ENCODE measurements at regions of chr2 and their contacts with region 1.

Region 1: GRCh38 chr2:170815746-170816503 is 762 bp upstream of the GAD1 start:
- DNase-seq: peak; percentile 89
- H3K4me3 ChIP-seq: peak overlapping the region; percentile 14 to 45; a peak in 2 of 4 replicates
- H3K27ac ChIP-seq: no peak overlapping the region
- H3K4me1 ChIP-seq: peaks cover 5 to 21% of the 10 kb centered on the region in 2 experiments; a peak in 2 of 4 replicates
- H3K27me3 ChIP-seq: peaks cover 82% of the 10 kb centered on the region
- CTCF ChIP-seq: peak; percentile 86
- EP300 ChIP-seq: no peak
- RAD21 ChIP-seq: peak; percentile 81

Region 2: DNA sequence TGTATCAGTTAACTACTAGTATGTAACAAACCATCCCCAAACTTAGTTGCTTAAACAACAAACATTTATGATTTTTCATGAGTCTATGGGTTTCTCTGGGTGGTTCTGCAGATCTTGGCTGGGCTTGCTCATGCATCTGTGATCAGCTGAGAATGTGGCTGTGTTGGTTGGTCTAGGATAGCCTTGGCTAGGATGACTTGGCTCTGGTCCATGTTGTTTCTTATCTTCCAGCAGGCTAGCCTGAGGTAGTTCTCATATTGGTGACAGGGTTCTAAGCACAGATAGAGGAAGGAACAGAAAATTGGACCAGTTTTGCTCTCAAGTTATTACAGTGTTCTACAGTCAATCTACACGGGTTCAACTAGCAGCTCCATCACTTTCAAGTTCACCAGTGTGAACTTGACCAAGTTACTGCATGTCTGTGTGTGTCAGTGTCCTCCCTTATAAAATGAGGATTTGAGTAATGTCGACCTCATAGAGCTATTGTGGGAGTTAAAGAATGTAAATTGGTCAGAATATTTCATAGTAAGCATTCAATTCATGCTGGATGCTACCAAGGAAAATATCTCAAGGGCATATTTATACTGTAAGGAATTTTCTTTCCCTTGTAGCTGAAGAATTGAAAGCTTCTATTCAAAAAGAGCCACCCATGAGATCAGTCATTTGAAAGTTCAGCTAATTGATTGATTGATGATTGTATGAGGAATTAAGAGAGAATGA is 572.6 kb before region 1 on chr2:
- CTCF ChIA-PET with region 1: interaction called, 94 read pairs
- POLR2A ChIA-PET with region 1: no interaction called
- DNase-seq: no peak
- H3K4me3 ChIP-seq: no peak overlapping the region
- H3K27ac ChIP-seq: no peak overlapping the region
- H3K4me1 ChIP-seq: no peaks in the 10 kb centered on the region
- H3K27me3 ChIP-seq: no peaks in the 10 kb centered on the region; the same call in 1 of the 2 replicates
- CTCF ChIP-seq: no peak
- EP300 ChIP-seq: no peak
- RAD21 ChIP-seq: no peak

Region 3: GRCh38 chr2:170361090-170361936 is 454.6 kb before region 1 on chr2:
- CTCF ChIA-PET with region 1: interaction called, 94 read pairs
- POLR2A ChIA-PET with region 1: no interaction called
- DNase-seq: peak; percentile 32
- H3K4me3 ChIP-seq: peak overlapping the region in 1 of 2 experiments; percentile 28; a peak in 1 of 4 replicates
- H3K27ac ChIP-seq: no peak overlapping the region
- H3K4me1 ChIP-seq: no peaks in the 10 kb centered on the region
- H3K27me3 ChIP-seq: peaks cover 8% of the 10 kb centered on the region; the same call in 1 of the 2 replicates
- CTCF ChIP-seq: peak; percentile 76
- EP300 ChIP-seq: no peak
- RAD21 ChIP-seq: peak; percentile 59

Region 4: DNA sequence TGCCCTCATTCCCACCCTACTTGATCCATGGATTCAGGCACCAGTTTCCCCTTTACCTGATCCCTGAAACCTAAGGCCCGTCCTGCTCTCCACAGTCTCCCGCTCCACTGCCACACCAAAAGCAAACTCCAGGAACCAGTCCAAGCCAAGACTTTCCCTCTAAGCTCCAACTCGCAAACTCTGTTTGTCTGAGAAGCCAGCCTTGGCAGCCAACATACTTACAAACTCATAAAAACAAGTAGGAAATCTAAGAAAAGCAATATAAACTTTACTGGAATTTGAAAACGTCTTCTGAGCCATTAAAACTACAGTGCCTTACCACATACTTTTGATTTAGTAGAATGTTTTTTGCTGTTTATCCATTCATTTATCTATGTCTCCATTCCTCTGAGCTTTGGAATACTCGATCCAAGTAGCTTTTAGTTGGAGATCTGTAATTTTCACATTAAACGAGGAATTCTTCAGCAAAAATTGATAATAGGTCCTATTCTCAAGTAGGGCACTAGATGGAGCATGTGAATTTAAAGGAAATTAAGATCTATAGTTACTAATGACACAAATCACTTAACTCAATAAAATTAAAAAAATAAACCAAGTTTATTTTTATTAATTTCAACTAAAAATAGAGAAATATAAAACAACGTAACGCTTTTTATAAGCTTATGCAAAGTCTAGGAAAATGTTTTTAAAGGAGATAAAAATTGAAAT is 438.3 kb before region 1 on chr2:
- CTCF ChIA-PET with region 1: interaction called, 56 read pairs
- POLR2A ChIA-PET with region 1: no interaction called
- DNase-seq: no peak
- H3K4me3 ChIP-seq: no peak overlapping the region
- H3K27ac ChIP-seq: no peak overlapping the region
- H3K4me1 ChIP-seq: no peaks in the 10 kb centered on the region
- H3K27me3 ChIP-seq: no peaks in the 10 kb centered on the region
- CTCF ChIP-seq: peak; percentile 29
- EP300 ChIP-seq: no peak
- RAD21 ChIP-seq: no peak

Region 5: DNA sequence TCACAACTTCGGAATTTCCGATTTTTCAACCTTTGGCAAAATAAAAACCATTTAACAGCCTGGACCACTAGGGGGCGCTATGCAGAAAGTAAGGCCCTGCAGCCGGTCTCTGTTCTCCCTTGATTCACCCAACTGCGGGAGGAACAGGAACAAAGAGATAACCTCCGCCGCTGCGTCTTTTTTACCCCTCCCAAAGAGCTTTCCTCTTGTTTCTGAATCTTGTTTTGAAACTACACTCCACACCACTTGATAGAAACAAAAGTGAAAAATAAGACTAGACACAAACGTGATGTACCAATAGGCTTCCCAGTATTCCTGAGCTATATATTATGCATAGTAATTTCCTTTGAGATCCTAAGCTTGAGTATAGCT is 406.8 kb before region 1 on chr2:
- CTCF ChIA-PET with region 1: interaction called, 148 read pairs
- POLR2A ChIA-PET with region 1: no interaction called
- DNase-seq: peak; percentile 66
- H3K4me3 ChIP-seq: no peak overlapping the region; a peak in 1 of 4 replicates
- H3K27ac ChIP-seq: no peak overlapping the region
- H3K4me1 ChIP-seq: no peaks in the 10 kb centered on the region
- H3K27me3 ChIP-seq: no peaks in the 10 kb centered on the region; the same call in 1 of the 2 replicates
- CTCF ChIP-seq: peak; percentile 95
- EP300 ChIP-seq: no peak
- RAD21 ChIP-seq: peak; percentile 70

Region 6: GRCh38 chr2:170783551-170783950 is 32.4 kb before region 1 on chr2:
- CTCF ChIA-PET with region 1: interaction called, 12 read pairs
- POLR2A ChIA-PET with region 1: no interaction called
- DNase-seq: no peak
- H3K4me3 ChIP-seq: no peak overlapping the region
- H3K27ac ChIP-seq: no peak overlapping the region
- H3K4me1 ChIP-seq: no peaks in the 10 kb centered on the region
- H3K27me3 ChIP-seq: peaks cover 9% of the 10 kb centered on the region; the same call in 1 of the 2 replicates
- CTCF ChIP-seq: no peak
- EP300 ChIP-seq: no peak
- RAD21 ChIP-seq: no peak

Region 7: GRCh38 chr2:170862286-170862902 is 46.5 kb after region 1 on chr2:
- CTCF ChIA-PET with region 1: no interaction called
- POLR2A ChIA-PET with region 1: no interaction called
- DNase-seq: no peak
- H3K4me3 ChIP-seq: no peak overlapping the region
- H3K27ac ChIP-seq: no peak overlapping the region
- H3K4me1 ChIP-seq: no peaks in the 10 kb centered on the region
- H3K27me3 ChIP-seq: no peaks in the 10 kb centered on the region
- CTCF ChIP-seq: no peak
- EP300 ChIP-seq: no peak
- RAD21 ChIP-seq: no peak

Region 8: GRCh38 chr2:170873035-170873692 is 57.2 kb after region 1 on chr2:
- CTCF ChIA-PET with region 1: interaction called, 30 read pairs
- POLR2A ChIA-PET with region 1: no interaction called
- DNase-seq: peak; percentile 81
- H3K4me3 ChIP-seq: peak overlapping the region; percentile 15 to 46; a peak in 3 of 4 replicates
- H3K27ac ChIP-seq: no peak overlapping the region
- H3K4me1 ChIP-seq: peaks cover 0 to 3% of the 10 kb centered on the region in 2 experiments; a peak in 1 of 4 replicates
- H3K27me3 ChIP-seq: no peaks in the 10 kb centered on the region
- CTCF ChIP-seq: peak; percentile 97
- EP300 ChIP-seq: no peak
- RAD21 ChIP-seq: peak; percentile 63

Region 9: GRCh38 chr2:171244970-171245782 is 429.3 kb after region 1 on chr2:
- CTCF ChIA-PET with region 1: no interaction called
- POLR2A ChIA-PET with region 1: no interaction called
- DNase-seq: no peak
- H3K4me3 ChIP-seq: no peak overlapping the region
- H3K27ac ChIP-seq: no peak overlapping the region
- H3K4me1 ChIP-seq: no peaks in the 10 kb centered on the region
- H3K27me3 ChIP-seq: no peaks in the 10 kb centered on the region
- CTCF ChIP-seq: no peak; the same call in 1 of the 2 replicates
- EP300 ChIP-seq: no peak
- RAD21 ChIP-seq: no peak

Measured in SK-N-SH (cell line).